ENCODE measurements at regions of chr11 and their contacts with region 1.

Region 1: GRCh38 chr11:695538-696248 is at the start of gene TMEM80:
- DNase-seq: peak; percentile 99
- ATAC-seq: peak; percentile 81
- H3K4me3 Mint-ChIP-seq: peak within 1 kb of the TSS; percentile 84
- H3K27ac Mint-ChIP-seq: peak within 1 kb of the TSS; percentile 94
- H3K4me1 Mint-ChIP-seq: peaks cover 51% of the 10 kb centered on the region
- H3K27me3 Mint-ChIP-seq: no peaks in the 10 kb centered on the region
- total RNA-seq, gene TMEM80: 11.4 to 11.9 TPM

Region 2: GRCh38 chr11:447923-448731 is 247.6 kb before region 1 on chr11:
- CTCF ChIA-PET with region 1: no interaction called
- POLR2A ChIA-PET with region 1: no interaction called
- intact Hi-C with region 1: loop called in 1 of 2 experiments (anchors 1 kb)
- DNase-seq: peak; percentile 99
- ATAC-seq: peak; percentile 79
- H3K4me3 Mint-ChIP-seq: peak overlapping the region; percentile 86
- H3K27ac Mint-ChIP-seq: peak overlapping the region; percentile 93
- H3K4me1 Mint-ChIP-seq: peaks cover 16% of the 10 kb centered on the region
- H3K27me3 Mint-ChIP-seq: peaks cover 3% of the 10 kb centered on the region

Region 3: DNA sequence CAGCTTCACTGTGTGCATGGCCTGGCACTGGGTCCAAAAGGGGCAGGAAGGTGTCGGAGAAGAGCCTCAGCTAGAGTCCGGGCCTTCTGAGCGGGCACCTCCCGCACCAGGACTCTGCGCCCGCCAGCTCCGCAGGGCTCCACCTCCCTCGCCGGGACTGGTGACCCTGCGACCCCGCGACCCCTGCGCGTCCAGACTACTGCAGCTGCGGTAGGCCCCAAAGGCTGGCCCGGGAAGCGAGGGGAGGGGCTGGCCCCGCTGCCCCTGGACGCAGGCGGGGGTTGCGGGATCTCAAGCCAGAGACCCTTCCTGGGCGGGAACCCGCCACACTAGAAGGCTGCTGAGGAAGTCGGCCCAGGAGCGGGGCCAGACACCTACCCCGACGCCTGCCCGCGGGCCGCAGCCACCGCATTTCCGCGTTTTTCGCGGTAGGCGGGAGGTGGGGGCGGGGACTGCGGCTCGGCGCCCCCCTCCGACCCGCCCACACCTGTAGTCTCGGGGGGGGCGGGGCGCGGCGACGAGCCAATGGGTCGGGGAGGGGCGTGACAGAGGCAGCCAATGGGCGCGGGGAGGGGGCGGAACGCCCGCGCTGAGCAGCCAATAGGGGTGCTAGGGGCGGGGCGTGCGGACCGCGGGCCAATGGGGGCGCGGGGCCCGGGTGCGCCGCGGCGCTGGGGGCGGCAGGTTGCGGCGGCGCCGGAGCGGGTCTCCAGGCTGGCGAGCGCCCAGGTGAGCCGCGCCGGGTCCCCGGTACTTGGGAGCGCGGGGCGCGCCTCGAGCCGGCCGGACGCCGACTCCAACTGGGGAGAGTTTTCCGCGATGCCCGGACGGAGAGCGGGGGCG is 135.2 kb before region 1 on chr11 and contains the starts of genes LMNTD2 and RASSF7:
- CTCF ChIA-PET with region 1: no interaction called
- POLR2A ChIA-PET with region 1: no interaction called
- intact Hi-C with region 1: loop called in 1 of 2 experiments (anchors 1 kb)
- DNase-seq: peak; percentile 97
- ATAC-seq: peak; percentile 93
- H3K4me3 Mint-ChIP-seq: peak within 1 kb of the TSS; percentile 85
- H3K27ac Mint-ChIP-seq: peak within 1 kb of the TSS; percentile 72
- H3K4me1 Mint-ChIP-seq: peaks cover 8% of the 10 kb centered on the region
- H3K27me3 Mint-ChIP-seq: peaks cover 2% of the 10 kb centered on the region
- total RNA-seq, gene LMNTD2: 2.7 to 4.9 TPM
- total RNA-seq, gene RASSF7: 16.8 TPM

Region 4: GRCh38 chr11:665704-666281 is 29.9 kb before region 1 on chr11:
- CTCF ChIA-PET with region 1: no interaction called
- POLR2A ChIA-PET with region 1: no interaction called
- intact Hi-C with region 1: no loop called
- DNase-seq: no peak
- ATAC-seq: no peak
- H3K4me3 Mint-ChIP-seq: no peak overlapping the region
- H3K27ac Mint-ChIP-seq: no peak overlapping the region
- H3K4me1 Mint-ChIP-seq: no peaks in the 10 kb centered on the region
- H3K27me3 Mint-ChIP-seq: no peaks in the 10 kb centered on the region

Region 5: GRCh38 chr11:727859-728748 is 32.4 kb after region 1 on chr11:
- CTCF ChIA-PET with region 1: interaction called, 13 read pairs
- POLR2A ChIA-PET with region 1: no interaction called
- intact Hi-C with region 1: loop called (anchors 1 to 5 kb)
- DNase-seq: peak; percentile 92
- ATAC-seq: peak; percentile 80
- H3K4me3 Mint-ChIP-seq: no peak overlapping the region
- H3K27ac Mint-ChIP-seq: no peak overlapping the region
- H3K4me1 Mint-ChIP-seq: peaks cover 5% of the 10 kb centered on the region
- H3K27me3 Mint-ChIP-seq: peaks cover 10% of the 10 kb centered on the region

Region 6: DNA sequence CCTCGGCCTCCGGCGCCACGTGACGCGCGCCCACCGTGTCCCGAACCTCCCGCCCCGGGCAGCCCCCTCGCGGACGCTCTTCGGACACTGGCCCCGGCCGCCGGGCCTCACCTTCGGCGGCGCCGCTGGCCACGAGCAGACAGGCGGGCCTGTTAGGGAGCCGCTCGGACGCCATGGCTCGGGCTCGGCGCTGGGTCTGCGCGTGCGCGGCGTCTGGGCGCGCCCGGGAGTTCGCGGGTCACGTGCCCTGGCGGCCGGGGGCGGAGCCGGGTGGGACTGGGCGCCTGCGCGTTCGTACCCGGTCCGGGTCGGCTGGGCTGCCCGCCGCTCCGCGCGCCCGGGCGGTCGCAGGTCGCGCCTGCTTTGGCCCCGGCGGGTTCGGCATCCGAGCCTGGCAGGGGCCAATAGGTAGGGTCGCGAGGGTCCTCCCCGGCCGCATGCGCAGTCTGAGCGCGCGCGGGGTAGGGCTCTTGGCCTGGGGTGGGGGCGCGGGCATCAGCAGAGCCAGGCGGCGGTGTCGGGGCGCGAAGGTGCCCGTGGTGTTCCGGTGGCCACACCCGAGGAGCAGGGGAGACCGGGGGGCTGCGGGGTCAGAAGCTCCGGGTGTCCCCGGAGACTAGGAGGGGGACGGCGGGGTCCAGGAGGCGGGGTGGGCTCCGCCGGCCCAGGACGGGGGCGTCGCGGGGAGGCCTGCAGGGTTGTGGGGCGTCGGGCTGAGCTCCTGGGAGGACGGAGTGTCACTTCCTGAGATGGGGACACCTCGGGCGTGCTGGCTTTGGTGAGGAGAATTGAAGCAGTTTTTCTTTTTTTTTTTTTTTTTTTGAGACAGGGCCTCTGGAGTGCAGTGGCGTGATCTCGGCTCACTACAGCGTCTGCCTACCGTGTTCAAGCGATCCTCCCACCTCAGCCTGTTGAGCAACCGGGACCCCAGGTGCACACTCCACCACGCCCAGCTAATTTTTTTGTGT is 81.9 kb after region 1 on chr11 and contains the start of gene GATD1:
- CTCF ChIA-PET with region 1: no interaction called
- POLR2A ChIA-PET with region 1: no interaction called
- intact Hi-C with region 1: loop called in 1 of 2 experiments (anchors 1 kb)
- DNase-seq: peak; percentile 97
- ATAC-seq: peak; percentile 91
- H3K4me3 Mint-ChIP-seq: peak within 1 kb of the TSS; percentile 89
- H3K27ac Mint-ChIP-seq: peak within 1 kb of the TSS; percentile 82
- H3K4me1 Mint-ChIP-seq: peaks cover 20% of the 10 kb centered on the region
- H3K27me3 Mint-ChIP-seq: no peaks in the 10 kb centered on the region
- total RNA-seq, gene GATD1: 45.7 to 59.8 TPM

Region 7: GRCh38 chr11:925496-926321 is 230.0 kb after region 1 on chr11 and contains the start of gene AP2A2:
- CTCF ChIA-PET with region 1: no interaction called
- POLR2A ChIA-PET with region 1: no interaction called
- intact Hi-C with region 1: loop called in 1 of 2 experiments (anchors 1 kb)
- DNase-seq: peak; percentile 96
- ATAC-seq: peak; percentile 65
- H3K4me3 Mint-ChIP-seq: peak within 1 kb of the TSS; percentile 80
- H3K27ac Mint-ChIP-seq: peak within 1 kb of the TSS; percentile 86
- H3K4me1 Mint-ChIP-seq: peaks cover 33% of the 10 kb centered on the region
- H3K27me3 Mint-ChIP-seq: no peaks in the 10 kb centered on the region
- total RNA-seq, gene AP2A2: 43.5 to 71.6 TPM

Region 8: DNA sequence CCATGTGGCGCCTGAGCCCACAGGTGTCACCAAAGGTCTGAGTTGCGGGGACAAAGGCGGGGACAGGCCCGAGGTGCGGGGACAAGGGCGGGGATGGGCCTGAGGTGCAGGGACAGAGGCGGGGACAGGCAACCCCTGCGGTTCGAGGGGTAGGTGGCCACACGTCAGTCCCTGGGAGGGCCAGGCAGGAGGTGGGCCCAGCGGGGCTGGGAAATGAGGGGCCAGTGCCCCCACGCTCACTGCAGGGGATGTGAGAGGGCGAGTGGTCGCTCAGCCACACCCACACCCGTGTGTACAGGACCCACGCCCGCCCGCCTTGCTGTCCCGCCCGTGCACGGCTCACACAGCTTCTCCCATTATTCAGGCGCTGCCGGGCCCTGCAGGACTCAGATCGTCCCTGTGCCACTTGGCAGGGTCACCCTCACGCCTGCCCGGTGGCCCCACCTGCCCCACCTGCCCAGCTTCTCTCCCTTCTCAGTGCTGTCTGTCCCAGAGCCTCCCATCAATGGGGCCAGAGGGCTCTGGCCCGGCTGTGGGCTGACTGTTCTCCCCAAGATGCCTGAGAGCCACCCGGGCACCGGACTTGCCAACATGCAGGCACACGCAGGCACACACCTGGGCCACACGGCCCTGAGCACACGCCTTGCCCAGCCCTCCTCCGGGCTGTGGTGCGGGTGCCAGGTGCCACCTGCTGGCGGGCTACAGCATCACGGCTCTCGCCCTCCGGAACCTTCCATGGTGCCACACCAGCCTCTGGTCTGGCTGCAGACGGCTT is 355.1 kb after region 1 on chr11:
- CTCF ChIA-PET with region 1: no interaction called
- POLR2A ChIA-PET with region 1: no interaction called
- intact Hi-C with region 1: no loop called
- DNase-seq: peak; percentile 79
- ATAC-seq: peak; percentile 96
- H3K4me3 Mint-ChIP-seq: no peak overlapping the region
- H3K27ac Mint-ChIP-seq: no peak overlapping the region
- H3K4me1 Mint-ChIP-seq: no peaks in the 10 kb centered on the region
- H3K27me3 Mint-ChIP-seq: peaks cover 4% of the 10 kb centered on the region

Measured in activated CD4-positive, alpha-beta T cell treated with anti-CD3 and anti-CD28 coated beads for 36 hours (primary cell).